ENCODE measurements at regions of chr3 and their contacts with region 1.

Region 1: DNA sequence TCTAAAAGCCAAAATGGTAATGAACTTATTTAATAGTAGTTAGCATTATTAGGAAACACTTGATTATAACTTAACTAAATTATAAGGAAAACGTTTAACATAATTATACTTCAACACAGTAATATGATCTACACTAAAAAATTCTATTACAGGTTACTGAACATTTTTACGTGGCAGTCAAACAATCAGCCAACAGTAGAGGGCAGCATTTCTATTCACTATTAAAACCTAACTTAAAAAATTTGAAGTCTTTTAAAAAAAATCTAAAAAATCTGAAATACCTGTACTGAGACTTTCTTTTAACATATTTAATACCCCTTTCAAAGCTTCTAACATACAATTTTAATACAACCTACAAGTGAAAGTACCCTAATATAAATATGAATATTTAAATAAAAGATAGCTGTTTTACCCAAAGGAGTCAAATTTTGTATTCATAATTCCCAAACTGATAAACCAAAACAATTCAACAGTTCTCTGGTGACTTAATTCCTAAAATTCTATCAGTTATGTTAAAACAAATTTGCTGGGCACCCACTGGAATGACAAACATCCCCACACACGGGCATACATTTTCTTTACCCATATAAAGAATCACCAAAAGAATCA is 41.5 kb downstream of the DLG1 start:
- DNase-seq: peak; percentile 7
- H3K4me3 ChIP-seq: no peak overlapping the region
- CTCF ChIP-seq: peak; percentile 30

Region 2: DNA sequence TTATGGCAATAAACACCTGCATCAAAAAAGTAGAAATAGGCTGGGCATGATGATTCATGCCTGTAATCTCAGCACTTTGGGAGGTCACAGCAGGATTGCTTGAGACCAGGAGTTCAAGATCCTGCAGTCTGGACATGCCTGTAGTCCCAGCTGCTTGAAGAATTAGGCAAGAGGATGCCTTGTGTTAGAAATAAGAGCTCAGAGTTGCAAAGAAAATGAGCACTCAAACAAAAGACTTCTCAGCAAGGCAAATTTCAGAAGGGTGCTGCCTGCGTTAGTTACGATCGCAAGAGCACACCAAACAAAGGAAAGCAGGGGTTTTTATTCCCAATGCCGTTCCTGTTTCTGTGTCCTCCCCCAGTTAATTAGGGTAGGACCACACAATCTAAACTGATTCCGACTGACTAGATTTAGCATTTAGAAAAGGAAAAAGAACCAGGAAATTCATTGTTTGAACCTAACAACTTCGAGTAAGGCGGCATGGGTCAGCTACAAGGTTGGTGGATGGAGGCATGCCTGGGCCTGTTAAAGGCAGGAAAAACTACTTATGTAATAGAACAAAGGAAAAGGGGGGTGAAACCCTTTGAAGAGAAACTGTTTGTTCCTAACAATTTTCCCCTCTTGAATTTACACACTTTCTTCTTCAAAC is 14.0 kb before region 1 on chr3:
- CTCF ChIA-PET with region 1: interaction called, 51 read pairs
- POLR2A ChIA-PET with region 1: no interaction called
- DNase-seq: no peak
- H3K4me3 ChIP-seq: no peak overlapping the region
- CTCF ChIP-seq: no peak

Region 3: GRCh38 chr3:197366301-197367044 is 109.5 kb after region 1 on chr3:
- CTCF ChIA-PET with region 1: interaction called, 17 read pairs
- POLR2A ChIA-PET with region 1: no interaction called
- DNase-seq: no peak
- H3K4me3 ChIP-seq: no peak overlapping the region
- CTCF ChIP-seq: no peak

Region 4: DNA sequence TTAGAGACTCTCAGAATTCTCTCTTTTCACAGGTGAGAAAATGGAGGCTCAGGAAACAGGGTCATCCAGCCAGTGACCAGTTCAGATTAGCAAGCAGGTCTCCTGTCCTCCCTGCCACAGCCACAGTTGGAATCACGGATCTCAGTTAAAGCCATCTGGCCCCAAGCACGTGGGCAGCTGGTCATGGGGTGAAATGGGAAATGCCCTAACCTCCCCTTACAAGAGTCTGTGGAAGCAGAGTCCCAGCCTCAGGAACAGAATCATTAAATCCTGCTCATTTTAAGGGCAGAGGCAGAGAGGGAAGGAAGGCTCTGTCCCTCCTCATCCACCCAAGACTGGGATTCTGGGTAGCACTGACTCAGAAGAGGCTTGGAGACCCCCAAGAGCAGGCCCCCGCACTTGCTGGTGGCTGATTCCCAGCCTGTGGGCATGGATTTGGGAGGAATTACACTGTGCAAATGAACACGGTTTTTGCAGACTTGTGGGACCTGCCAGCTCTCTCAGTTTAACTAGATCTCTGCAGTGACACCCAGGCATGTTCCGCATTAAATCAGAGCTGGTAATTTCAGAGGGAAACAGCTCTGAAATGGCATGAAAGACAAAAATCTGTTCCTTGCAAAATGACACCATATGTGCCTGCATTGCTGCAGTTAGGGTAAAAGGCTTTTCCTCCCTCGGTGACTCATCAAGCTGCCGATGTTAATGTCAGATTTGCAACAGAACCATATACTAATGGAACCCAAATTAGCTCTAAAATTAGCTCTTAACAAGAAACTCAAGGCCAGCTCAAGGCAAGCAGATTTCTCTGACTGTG is 209.9 kb after region 1 on chr3:
- CTCF ChIA-PET with region 1: interaction called, 12 read pairs
- POLR2A ChIA-PET with region 1: no interaction called
- DNase-seq: no peak
- H3K4me3 ChIP-seq: peak overlapping the region; percentile 33
- CTCF ChIP-seq: no peak

Region 5: DNA sequence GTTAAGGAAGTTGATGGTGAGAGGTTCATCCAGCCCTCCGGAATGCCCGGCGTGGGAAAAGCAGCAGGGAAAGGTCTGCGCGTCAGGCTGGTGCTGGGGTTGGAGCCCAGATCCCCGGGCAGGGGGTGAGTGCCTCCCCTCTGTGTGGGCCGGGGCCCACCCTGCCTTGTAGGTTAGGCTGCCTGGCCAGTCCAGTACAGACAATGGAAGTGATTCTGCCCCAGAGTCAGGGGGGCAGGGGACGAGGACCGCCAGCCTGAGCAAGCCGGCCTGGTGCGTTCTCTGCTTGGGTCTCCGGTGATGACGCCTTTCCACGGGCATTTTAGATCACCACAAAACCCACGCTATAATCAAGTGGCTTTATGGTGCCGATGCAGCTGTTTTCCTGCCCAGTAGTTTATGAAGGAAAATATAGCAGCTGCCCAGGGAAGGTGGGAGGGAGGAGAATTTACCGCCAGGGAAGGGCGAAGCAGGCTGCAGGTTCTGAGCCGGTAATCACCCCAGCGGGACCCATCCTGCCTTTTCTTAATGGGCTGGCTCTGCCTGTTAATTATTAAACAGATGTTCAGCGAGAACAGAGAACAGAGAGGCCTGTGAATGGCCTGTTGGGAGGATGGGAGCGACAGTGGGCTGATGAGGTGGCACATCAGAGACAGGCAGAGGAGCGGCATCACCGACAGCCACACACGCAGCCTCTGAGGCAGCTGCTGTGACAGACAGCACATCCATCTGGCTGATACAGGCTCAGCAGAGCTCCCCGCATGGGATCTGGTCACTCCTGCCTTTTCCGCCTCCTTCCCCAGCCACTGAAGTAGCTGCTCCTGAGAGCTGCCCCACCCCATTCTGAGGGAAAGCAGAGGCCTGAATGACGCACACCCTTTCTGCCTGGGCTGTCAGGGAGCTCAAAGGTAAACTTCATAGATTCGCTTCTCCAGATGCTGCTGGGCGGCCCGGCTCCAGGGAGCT is 263.7 kb after region 1 on chr3:
- CTCF ChIA-PET with region 1: interaction called, 79 read pairs
- POLR2A ChIA-PET with region 1: no interaction called
- DNase-seq: no peak
- H3K4me3 ChIP-seq: no peak overlapping the region
- CTCF ChIP-seq: no peak